Activated CD4-positive, alpha-beta memory T cell treated with anti-CD3 and anti-CD28 coated beads for 36 hours (primary cell): ENCODE measurements at regions of chr7 and their contacts with region 1.

Region 1: DNA sequence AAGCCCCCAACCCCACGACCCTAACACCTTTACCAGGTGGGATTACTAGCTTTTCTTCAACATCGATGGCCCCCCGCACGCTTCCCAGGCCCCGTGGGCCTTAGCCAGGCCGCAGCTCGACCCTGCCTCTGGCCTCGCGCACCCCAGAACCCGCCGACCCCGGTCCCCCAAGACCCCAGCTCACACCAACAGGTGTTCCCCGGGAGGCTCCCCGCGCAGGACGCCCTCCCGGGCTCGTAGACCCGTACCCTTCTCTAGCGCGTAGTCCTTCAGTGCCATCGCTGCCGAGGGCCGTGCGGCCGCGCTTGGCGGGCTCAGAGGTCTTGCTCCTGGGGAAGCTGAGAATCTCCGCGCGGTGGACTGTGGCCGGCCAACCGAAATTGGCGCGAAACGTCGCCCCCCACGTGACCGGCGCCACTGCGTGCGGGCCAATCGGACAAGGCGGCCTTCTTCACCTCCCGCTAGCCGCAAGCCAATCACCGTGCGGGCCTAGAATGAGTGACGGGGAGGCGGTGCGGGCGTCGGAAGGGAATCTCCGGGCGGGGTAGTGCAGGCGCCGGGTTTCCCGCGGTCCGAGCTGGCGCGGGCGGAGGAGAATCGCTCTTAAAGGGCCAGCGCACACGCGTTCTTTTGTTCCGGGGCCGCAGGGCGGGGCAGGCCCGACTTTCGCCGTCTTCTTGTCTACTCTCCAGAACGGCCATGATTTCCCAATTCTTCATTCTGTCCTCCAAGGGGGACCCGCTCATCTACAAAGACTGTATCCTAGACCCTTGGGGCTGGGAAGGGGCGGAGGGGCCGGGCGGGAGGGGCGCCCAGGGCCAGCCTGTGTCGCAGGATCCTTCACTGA is at the starts of genes AP4M1 and MCM7:
- DNase-seq: peak; percentile 99
- H3K4me3 Mint-ChIP-seq: peak within 1 kb of the TSS; percentile 90
- H3K27ac Mint-ChIP-seq: peak within 1 kb of the TSS; percentile 95
- H3K4me1 Mint-ChIP-seq: peaks cover 40% of the 10 kb centered on the region
- H3K27me3 Mint-ChIP-seq: no peaks in the 10 kb centered on the region
- total RNA-seq, gene AP4M1: 11.3 to 12.2 TPM
- total RNA-seq, gene MCM7: 393 to 398 TPM

Region 2: GRCh38 chr7:100044701-100045100 is 56.5 kb before region 1 on chr7:
- CTCF ChIA-PET with region 1: no interaction called
- POLR2A ChIA-PET with region 1: no interaction called
- intact Hi-C with region 1: no loop called
- DNase-seq: peak; percentile 23
- H3K4me3 Mint-ChIP-seq: no peak overlapping the region
- H3K27ac Mint-ChIP-seq: no peak overlapping the region
- H3K4me1 Mint-ChIP-seq: peaks cover 10% of the 10 kb centered on the region
- H3K27me3 Mint-ChIP-seq: no peaks in the 10 kb centered on the region

Region 3: DNA sequence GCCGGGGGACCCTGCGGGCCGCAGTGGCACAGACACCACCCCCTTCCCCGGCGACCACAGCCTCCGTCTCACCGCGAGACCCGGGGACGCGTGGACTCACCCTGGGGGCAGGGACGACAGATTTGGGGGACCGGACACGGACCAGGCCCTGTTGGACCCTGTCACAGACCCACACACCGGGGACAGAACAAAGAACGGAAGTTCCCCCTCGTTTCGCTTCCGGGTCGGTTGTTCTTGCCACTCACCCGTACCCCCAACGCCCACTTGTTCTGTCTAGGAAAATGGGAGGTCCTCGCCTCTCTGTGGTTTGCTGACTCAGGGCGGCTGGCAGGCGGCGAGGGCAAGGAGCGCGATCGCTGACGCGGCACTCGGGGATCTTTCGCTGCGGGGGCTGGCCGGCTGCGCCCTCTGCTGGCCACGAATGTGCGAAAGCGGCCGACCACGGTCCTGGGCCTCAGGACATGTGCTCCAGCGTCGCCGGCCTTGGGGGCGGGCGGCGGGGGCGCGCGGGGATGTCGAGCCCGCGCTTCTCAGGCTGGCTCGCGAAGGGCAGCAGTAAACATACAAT is 19.6 kb before region 1 on chr7 and contains the start of gene ZNF3:
- CTCF ChIA-PET with region 1: interaction called, 8 read pairs
- POLR2A ChIA-PET with region 1: interaction called, 17 read pairs
- intact Hi-C with region 1: loop called (anchors 1 kb)
- DNase-seq: peak; percentile 99
- H3K4me3 Mint-ChIP-seq: peak within 1 kb of the TSS; percentile 83
- H3K27ac Mint-ChIP-seq: peak within 1 kb of the TSS; percentile 85
- H3K4me1 Mint-ChIP-seq: peaks cover 29% of the 10 kb centered on the region
- H3K27me3 Mint-ChIP-seq: no peaks in the 10 kb centered on the region
- total RNA-seq, gene ZNF3: 18.0 to 18.6 TPM

Region 4: GRCh38 chr7:100088621-100089457 is 12.4 kb before region 1 on chr7 and contains the start of gene COPS6:
- CTCF ChIA-PET with region 1: interaction called, 11 read pairs
- POLR2A ChIA-PET with region 1: interaction called, 44 read pairs
- intact Hi-C with region 1: loop called (anchors 1 kb)
- DNase-seq: peak; percentile 89
- H3K4me3 Mint-ChIP-seq: peak within 1 kb of the TSS; percentile 93
- H3K27ac Mint-ChIP-seq: peak within 1 kb of the TSS; percentile 95
- H3K4me1 Mint-ChIP-seq: peaks cover 40% of the 10 kb centered on the region
- H3K27me3 Mint-ChIP-seq: no peaks in the 10 kb centered on the region
- total RNA-seq, gene COPS6: 93.1 to 98.2 TPM

Region 5: GRCh38 chr7:100119062-100119700 is 17.9 kb after region 1 on chr7 and contains the starts of genes CNPY4 and TAF6:
- CTCF ChIA-PET with region 1: interaction called, 4 read pairs
- POLR2A ChIA-PET with region 1: interaction called, 11 read pairs
- intact Hi-C with region 1: loop called (anchors 1 kb)
- DNase-seq: peak; percentile 96
- H3K4me3 Mint-ChIP-seq: peak within 1 kb of the TSS; percentile 95
- H3K27ac Mint-ChIP-seq: peak within 1 kb of the TSS; percentile 82
- H3K4me1 Mint-ChIP-seq: peaks cover 19% of the 10 kb centered on the region
- H3K27me3 Mint-ChIP-seq: no peaks in the 10 kb centered on the region
- total RNA-seq, gene CNPY4: 11.9 to 12.4 TPM
- total RNA-seq, gene TAF6: 54.3 to 63.7 TPM

Region 6: DNA sequence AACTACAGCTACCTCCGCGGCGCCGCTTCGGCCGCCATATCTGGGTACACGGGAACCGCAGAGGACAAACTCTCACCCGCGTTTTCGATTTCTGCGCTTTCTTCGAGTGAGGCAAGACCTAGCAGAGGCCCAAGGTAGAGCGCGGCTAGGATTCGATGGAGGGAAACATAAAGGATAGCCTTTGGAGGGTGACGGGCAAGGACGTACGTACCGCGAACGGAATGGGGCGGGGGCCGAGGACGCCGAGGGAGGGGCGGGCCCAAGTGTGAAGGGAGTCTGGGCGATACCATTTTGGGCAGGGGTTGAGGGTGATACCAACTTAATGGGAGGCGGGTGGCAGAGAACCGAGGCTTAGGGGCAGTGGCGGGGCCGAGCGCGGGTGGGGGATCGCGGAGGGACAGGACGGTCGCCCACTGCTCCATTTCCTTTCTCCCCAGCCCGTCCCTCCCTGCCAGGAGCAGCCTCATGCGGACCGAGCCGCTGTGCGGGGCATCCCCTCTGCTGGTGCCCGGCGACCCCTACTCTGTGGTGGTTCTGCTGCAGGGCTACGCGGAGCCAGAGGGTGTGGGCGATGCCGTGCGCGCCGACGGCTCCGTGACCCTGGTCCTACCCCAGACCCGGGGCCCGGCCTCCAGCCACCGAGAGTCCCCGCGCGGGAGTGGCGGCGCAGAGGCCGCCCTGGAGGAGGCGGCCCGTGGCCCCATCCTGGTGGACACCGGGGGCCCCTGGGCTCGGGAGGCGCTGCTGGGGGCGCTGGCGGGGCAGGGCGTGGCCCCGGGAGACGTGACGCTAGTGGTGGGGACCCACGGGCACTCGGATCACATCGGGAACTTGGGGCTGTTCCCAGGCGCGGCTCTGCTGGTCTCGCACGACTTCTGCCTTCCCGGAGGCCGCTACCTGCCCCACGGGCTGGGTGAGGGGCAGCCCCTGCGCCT is 26.0 kb after region 1 on chr7 and contains the start of gene MBLAC1:
- CTCF ChIA-PET with region 1: interaction called, 21 read pairs
- POLR2A ChIA-PET with region 1: interaction called, 18 read pairs
- intact Hi-C with region 1: loop called (anchors 1 kb)
- DNase-seq: peak; percentile 93
- H3K4me3 Mint-ChIP-seq: peak within 1 kb of the TSS; percentile 95
- H3K27ac Mint-ChIP-seq: peak within 1 kb of the TSS; percentile 96
- H3K4me1 Mint-ChIP-seq: peaks cover 28% of the 10 kb centered on the region
- H3K27me3 Mint-ChIP-seq: no peaks in the 10 kb centered on the region
- total RNA-seq, gene MBLAC1: 2.3 to 3.4 TPM